CD14-positive monocyte (primary cell): ENCODE measurements at regions of chr16 and their contacts with region 1.

Region 1: DNA sequence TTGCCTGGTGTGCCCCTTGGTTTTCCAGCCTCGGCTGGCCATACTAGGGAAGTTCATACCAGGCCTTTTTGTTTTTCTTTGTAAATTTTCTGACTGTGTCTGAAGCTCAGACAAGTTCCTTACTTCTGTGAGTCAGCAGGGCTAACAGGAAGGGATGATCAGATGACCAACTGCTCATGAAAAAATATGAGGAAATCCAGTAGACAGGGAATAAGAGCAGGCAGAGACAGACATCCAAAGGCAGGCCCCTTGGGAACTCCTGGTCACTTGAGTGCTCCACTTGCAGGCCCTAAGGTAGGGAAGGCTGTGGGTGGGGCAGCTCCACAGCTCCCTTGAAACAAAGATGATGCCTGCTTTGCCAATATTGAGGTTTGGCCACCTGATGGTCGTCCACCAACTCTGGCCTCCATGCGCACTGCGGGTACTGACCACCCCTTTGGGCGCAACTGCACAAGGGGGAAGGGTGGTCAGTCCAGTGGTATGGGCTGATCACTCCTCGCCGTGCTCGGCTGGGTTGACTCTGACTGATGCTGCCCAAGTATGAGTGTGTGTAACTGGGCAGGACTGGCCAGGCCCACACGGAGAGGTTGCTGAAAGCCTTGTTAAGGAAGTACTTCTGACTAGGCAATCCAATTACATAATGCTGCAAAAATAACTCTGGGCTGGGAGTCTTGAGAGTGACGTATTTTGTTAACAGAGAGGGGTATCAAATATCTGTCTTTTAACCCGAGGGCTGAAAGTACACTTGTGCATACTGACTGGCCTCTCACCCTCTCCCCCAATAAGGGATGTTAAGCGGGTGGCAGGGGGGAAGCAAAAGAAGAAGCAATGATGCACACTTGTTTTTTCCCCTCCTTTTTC is 20.8 kb upstream of the ZFHX3 start:
- DNase-seq: peak; percentile 93 to 97 (median 96)
- H3K4me3 ChIP-seq: peak overlapping the region in 1 of 3 experiments; percentile 47
- H3K4me3 Mint-ChIP-seq: peak overlapping the region; percentile 51 to 81
- H3K27ac ChIP-seq: peak overlapping the region; percentile 94 to 99
- H3K27ac Mint-ChIP-seq: peak overlapping the region; percentile 99 to 100 (median 100)
- H3K4me1 ChIP-seq: peaks cover 79 to 80% of the 10 kb centered on the region in 2 donors
- H3K4me1 Mint-ChIP-seq: peaks cover 77% of the 10 kb centered on the region
- H3K27me3 ChIP-seq: peaks cover 15 to 38% of the 10 kb centered on the region in 2 donors
- H3K27me3 Mint-ChIP-seq: peaks cover 35 to 60% (median 39%) of the 10 kb centered on the region in 3 donors
- CTCF ChIP-seq: no peak

Region 2: DNA sequence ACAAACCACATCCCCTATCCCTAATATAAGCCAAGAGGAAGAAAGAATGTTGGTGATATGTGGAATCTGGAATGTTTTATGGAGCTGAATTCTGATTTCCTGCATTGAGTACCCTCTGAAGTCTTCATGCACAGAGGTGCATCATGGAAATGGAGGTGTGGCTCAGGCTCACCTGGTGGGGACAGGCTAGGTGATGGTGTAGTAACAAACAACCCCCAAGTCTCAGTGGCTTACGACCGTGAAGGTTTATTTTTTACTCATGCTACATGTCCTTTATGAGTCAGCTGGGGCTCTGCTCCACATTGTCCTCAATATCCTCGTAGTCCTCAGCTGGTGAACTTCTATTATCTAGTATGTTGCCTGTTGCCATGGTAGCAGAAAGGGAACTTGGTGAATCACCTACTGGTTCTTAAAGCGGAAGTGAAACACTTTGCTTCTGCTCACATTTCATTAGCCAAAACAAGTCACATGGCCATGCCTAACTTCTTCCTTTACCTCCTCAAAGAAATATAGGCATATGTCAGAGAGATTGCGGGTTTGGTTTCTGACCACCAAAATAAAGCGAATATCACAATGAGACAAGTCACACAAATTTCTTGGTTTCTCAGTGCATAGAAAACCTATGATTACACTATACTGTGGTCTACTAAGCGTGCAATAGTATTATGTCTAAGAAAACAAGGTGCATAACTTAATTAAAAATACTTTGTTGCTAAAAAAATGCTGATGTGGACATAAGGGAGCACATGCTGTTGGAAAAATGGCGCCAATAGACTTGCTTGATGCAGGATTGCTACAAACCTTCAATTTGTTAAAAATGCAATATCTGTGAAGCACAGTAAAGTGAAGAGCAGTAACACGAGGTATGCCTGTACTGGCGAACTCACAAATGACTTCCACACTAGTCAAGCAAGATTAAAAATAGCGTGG is 896.4 kb before region 1 on chr16 and contains the start of gene PMFBP1:
- intact Hi-C with region 1: loop called in 1 of 2 experiments (anchors 10 kb)
- DNase-seq: peak; percentile 98 to 100 (median 100)
- H3K4me3 ChIP-seq: no peak within 1 kb of the TSS
- H3K4me3 Mint-ChIP-seq: peak within 1 kb of the TSS in 1 of 2 donors; percentile 71
- H3K27ac ChIP-seq: peak within 1 kb of the TSS; percentile 69 to 97
- H3K27ac Mint-ChIP-seq: peak within 1 kb of the TSS; percentile 93 to 99 (median 97)
- H3K4me1 ChIP-seq: peaks cover 25 to 26% of the 10 kb centered on the region in 2 donors
- H3K4me1 Mint-ChIP-seq: peaks cover 21% of the 10 kb centered on the region
- H3K27me3 ChIP-seq: no peaks in the 10 kb centered on the region
- H3K27me3 Mint-ChIP-seq: peaks cover 0 to 4% (median 0%) of the 10 kb centered on the region in 3 donors
- CTCF ChIP-seq: no peak
- polyA plus RNA-seq, gene PMFBP1: 0.15 to 0.87 (median 0.18) TPM

Region 3: GRCh38 chr16:72203401-72203800 is 865.4 kb before region 1 on chr16:
- intact Hi-C with region 1: loop called in 1 of 2 experiments (anchors 5 kb)
- DNase-seq: peak; percentile 96 to 98 (median 97)
- H3K4me3 ChIP-seq: peak overlapping the region in 2 of 3 experiments; percentile 13 to 52
- H3K4me3 Mint-ChIP-seq: peak overlapping the region; percentile 47 to 83
- H3K27ac ChIP-seq: peak overlapping the region; percentile 97 to 100
- H3K27ac Mint-ChIP-seq: peak overlapping the region; percentile 99 to 100 (median 100)
- H3K4me1 ChIP-seq: peaks cover 37 to 44% of the 10 kb centered on the region in 2 donors
- H3K4me1 Mint-ChIP-seq: peaks cover 50% of the 10 kb centered on the region
- H3K27me3 ChIP-seq: no peaks in the 10 kb centered on the region
- H3K27me3 Mint-ChIP-seq: no peaks in the 10 kb centered on the region
- CTCF ChIP-seq: no peak

Region 4: DNA sequence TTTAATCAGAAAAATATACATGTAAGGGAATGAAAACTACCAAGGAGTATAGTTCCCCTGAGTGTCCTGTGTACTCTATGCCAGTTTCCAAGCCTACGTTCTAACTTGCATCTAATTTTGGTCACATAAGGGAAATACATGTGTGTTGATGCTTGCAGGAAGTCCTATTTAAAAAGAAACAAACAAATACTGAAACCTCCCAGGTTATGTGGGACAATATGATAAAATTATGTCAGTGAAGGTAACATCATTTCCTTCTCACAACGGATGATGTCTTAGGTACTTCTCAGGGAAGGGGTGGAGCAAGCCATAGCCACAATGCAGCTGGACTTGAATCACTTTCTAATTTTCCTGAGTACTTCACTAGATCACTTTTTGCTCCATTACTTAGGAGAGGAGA is 136.7 kb before region 1 on chr16:
- intact Hi-C with region 1: loop called in 1 of 2 experiments (anchors 5 kb)
- DNase-seq: peak; percentile 57 to 77 (median 74)
- H3K4me3 ChIP-seq: peak overlapping the region; percentile 3 to 25 (median 21)
- H3K4me3 Mint-ChIP-seq: peak overlapping the region; percentile 5 to 69
- H3K27ac ChIP-seq: peak overlapping the region; percentile 55 to 99
- H3K27ac Mint-ChIP-seq: peak overlapping the region; percentile 96 to 100 (median 99)
- H3K4me1 ChIP-seq: peaks cover 63 to 64% of the 10 kb centered on the region in 2 donors
- H3K4me1 Mint-ChIP-seq: peaks cover 64% of the 10 kb centered on the region
- H3K27me3 ChIP-seq: no peaks in the 10 kb centered on the region
- H3K27me3 Mint-ChIP-seq: peaks cover 0 to 4% (median 0%) of the 10 kb centered on the region in 3 donors
- CTCF ChIP-seq: no peak

Region 5: DNA sequence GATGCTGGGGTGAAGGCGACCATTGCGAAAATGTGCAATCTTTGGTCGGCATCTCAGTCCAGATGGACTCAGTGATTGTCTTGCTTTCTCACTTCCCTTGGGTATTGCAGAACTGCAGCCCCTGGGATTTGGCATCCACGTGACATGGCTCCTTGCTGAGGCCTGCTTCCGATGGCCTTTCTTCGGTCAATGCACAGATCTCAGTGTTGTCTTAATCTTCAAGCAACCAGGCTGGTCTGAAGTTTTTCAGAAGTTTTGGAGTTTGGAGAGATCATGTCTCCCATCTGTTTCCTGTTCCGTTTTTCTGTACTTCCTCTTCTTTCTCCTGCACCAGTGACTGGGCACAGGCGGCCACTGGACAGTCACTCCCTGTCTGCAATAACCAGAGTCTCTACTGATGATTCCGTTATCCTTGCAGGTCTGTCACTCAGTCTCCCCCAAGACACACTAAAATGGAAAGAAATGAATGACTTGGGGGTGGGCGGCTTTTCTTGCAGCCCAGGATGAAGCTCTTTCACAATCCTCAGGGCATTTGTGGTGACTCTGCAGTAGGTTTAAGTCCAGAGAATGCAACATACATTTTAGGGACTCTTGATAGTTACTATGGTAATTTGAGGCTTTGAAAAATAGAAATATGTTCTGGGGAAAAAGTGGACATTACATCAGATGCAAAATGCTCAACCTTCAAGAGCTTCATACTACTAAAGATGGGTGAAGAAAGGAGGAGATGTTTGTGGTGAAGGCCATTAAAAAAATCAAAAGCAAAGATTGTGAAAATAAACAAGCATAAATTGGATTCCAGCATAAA is 85.5 kb after region 1 on chr16:
- intact Hi-C with region 1: loop called in 1 of 2 experiments (anchors 2 kb)
- DNase-seq: peak; percentile 91 to 95 (median 93)
- H3K4me3 ChIP-seq: peak overlapping the region in 1 of 3 experiments; percentile 35
- H3K4me3 Mint-ChIP-seq: peak overlapping the region; percentile 16 to 64
- H3K27ac ChIP-seq: peak overlapping the region; percentile 84 to 92
- H3K27ac Mint-ChIP-seq: peak overlapping the region; percentile 93 to 98 (median 97)
- H3K4me1 ChIP-seq: peaks cover 65 to 66% of the 10 kb centered on the region in 2 donors
- H3K4me1 Mint-ChIP-seq: peaks cover 69% of the 10 kb centered on the region
- H3K27me3 ChIP-seq: no peaks in the 10 kb centered on the region
- H3K27me3 Mint-ChIP-seq: peaks cover 0 to 2% (median 2%) of the 10 kb centered on the region in 3 donors
- CTCF ChIP-seq: no peak